PC-3 (cell line): ENCODE measurements at regions of chr10 and their contacts with region 1.

Region 1: GRCh38 chr10:110304780-110305421 is at the start of gene SMNDC1:
- DNase-seq: peak; percentile 98
- ATAC-seq: peak; percentile 90
- H3K4me3 ChIP-seq: peak within 1 kb of the TSS; percentile 92
- H3K27ac ChIP-seq: peak within 1 kb of the TSS; percentile 92
- H3K4me1 ChIP-seq: peaks cover 50% of the 10 kb centered on the region
- H3K27me3 ChIP-seq: no peaks in the 10 kb centered on the region
- CTCF ChIP-seq: no peak
- total RNA-seq, gene SMNDC1: 16.3 and 18.4 TPM in 2 replicates

Region 2: DNA sequence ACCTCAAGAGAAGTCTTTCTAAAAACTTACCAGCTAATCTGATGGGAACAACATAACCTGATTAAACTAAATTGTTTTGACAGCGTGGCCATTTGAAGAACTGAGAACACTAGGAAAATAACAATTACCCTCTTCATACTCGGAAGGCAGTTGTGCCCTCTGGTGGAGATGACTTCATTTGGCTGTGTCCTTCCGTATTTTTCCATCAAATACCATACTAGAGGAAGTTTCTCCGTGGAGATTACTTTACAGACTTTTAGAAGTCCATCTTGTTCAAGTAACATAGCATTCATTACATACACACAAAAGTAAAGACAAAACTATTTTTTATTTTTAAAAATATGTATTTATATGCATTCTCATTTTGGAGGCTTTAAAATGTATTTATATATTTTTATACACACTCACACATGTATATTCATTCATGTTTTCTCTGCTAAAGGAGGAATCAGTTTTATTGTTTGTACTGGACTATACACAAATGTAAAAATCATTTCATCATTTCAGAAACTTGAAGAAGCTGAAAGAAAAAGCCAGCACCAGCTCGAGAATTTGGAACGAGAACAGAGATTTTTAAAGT is 25.4 kb before region 1 on chr10:
- CTCF ChIA-PET with region 1: no interaction called
- POLR2A ChIA-PET with region 1: no interaction called
- intact Hi-C with region 1: no loop called
- DNase-seq: peak; percentile 62
- ATAC-seq: peak; percentile 63
- H3K4me3 ChIP-seq: 0 out of 2 replicates have a peak overlapping the region, but pooled peaks have one; percentile 32
- H3K27ac ChIP-seq: no peak overlapping the region
- H3K4me1 ChIP-seq: no peaks in the 10 kb centered on the region
- H3K27me3 ChIP-seq: no peaks in the 10 kb centered on the region
- CTCF ChIP-seq: peak; percentile 75

Region 3: DNA sequence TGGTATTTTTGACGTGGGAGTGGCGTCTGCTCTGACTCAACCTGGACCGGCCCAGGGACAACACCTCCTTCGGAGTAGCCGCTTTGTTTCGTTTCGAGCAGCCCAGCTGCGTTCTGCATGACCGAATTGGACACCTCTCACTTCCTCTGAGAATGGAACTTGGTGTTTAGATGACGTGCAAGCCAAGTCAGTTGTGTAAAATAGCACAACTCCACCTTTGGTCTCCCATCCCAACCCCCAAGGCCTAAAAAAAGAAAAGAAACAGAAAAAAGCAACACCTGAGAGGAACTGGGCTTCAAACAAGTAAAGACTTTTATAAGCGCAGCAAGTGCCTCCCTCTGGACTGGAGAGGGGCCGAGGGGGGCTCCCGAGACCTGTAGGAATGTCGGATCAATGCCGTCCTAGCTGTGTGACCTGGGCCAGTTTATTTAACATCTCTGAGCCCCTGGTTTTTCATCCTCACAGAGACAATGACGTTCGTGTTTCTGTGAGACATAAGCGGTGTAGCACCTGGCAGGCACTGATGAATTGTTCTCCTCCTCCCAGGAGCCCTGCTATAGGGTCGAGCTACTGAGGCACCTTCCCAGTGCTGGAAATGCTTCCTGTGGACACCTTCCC is 51.8 kb after region 1 on chr10:
- CTCF ChIA-PET with region 1: interaction called, 10 read pairs
- POLR2A ChIA-PET with region 1: interaction called, 9 read pairs
- intact Hi-C with region 1: loop called (anchors 2 kb)
- DNase-seq: peak; percentile 79
- ATAC-seq: peak; percentile 68
- H3K4me3 ChIP-seq: peak overlapping the region; percentile 46; the same call in 1 of the 2 replicates
- H3K27ac ChIP-seq: peak overlapping the region; percentile 95
- H3K4me1 ChIP-seq: peaks cover 61% of the 10 kb centered on the region
- H3K27me3 ChIP-seq: no peaks in the 10 kb centered on the region
- CTCF ChIP-seq: no peak

Region 4: DNA sequence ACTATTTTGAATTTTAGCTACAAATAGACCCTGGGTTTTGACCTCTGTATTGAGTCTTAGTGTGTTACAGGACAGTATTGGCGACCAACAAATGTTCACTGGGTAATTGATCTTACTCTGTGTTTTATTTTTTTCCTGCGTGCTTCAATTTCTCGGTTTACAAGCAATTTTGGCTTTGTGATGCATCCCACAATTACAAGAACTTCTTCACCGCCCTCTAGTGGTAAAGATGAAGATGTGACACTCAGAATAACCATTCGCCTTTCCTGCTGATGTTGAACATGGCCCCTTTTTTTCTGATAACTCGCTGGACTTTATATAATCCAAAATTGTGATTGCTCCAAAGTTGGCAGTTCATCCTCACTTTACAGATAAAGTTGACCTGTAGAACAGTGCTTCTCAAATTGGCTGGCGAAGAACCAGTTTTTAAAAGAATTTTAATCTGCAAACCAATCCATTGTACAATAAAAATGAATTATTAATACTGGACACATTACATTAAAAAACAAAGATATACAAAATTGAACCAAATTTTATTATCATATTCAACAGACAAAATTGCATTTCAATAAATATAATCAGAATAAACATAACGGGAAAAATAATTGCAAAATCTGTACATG is 242.3 kb after region 1 on chr10:
- CTCF ChIA-PET with region 1: interaction called, 8 read pairs
- POLR2A ChIA-PET with region 1: no interaction called
- intact Hi-C with region 1: loop called (anchors 1 kb)
- DNase-seq: peak; percentile 71
- ATAC-seq: peak; percentile 53; the same call in 1 of the 2 replicates
- H3K4me3 ChIP-seq: no peak overlapping the region
- H3K27ac ChIP-seq: no peak overlapping the region
- H3K4me1 ChIP-seq: peaks cover 3% of the 10 kb centered on the region; the same call in 1 of the 2 replicates
- H3K27me3 ChIP-seq: no peaks in the 10 kb centered on the region
- CTCF ChIP-seq: peak; percentile 78

Region 5: GRCh38 chr10:110600487-110601101 is 295.7 kb after region 1 on chr10:
- CTCF ChIA-PET with region 1: interaction called, 6 read pairs
- POLR2A ChIA-PET with region 1: no interaction called
- intact Hi-C with region 1: loop called (anchors 1 kb)
- DNase-seq: peak; percentile 70
- ATAC-seq: peak; percentile 61
- H3K4me3 ChIP-seq: no peak overlapping the region
- H3K27ac ChIP-seq: no peak overlapping the region
- H3K4me1 ChIP-seq: no peaks in the 10 kb centered on the region
- H3K27me3 ChIP-seq: no peaks in the 10 kb centered on the region
- CTCF ChIP-seq: peak; percentile 64

Region 6: GRCh38 chr10:110901954-110902819 is 597.3 kb after region 1 on chr10:
- CTCF ChIA-PET with region 1: no interaction called
- POLR2A ChIA-PET with region 1: interaction called, 18 read pairs
- intact Hi-C with region 1: no loop called
- DNase-seq: peak; percentile 51
- ATAC-seq: peak; percentile 55; the same call in 1 of the 2 replicates
- H3K4me3 ChIP-seq: no peak overlapping the region
- H3K27ac ChIP-seq: no peak overlapping the region
- H3K4me1 ChIP-seq: peaks cover 7% of the 10 kb centered on the region; the same call in 1 of the 2 replicates
- H3K27me3 ChIP-seq: no peaks in the 10 kb centered on the region
- CTCF ChIP-seq: no peak

Region 7: GRCh38 chr10:112039823-112040222 is 1734.9 kb after region 1 on chr10:
- CTCF ChIA-PET with region 1: no interaction called
- POLR2A ChIA-PET with region 1: interaction called, 12 read pairs
- intact Hi-C with region 1: no loop called
- DNase-seq: no peak
- ATAC-seq: no peak
- H3K4me3 ChIP-seq: no peak overlapping the region
- H3K27ac ChIP-seq: no peak overlapping the region
- H3K4me1 ChIP-seq: no peaks in the 10 kb centered on the region
- H3K27me3 ChIP-seq: no peaks in the 10 kb centered on the region
- CTCF ChIP-seq: no peak